CD8-positive, alpha-beta T cell (primary cell): ENCODE measurements at regions of chr16 and their contacts with region 1.

Region 1: DNA sequence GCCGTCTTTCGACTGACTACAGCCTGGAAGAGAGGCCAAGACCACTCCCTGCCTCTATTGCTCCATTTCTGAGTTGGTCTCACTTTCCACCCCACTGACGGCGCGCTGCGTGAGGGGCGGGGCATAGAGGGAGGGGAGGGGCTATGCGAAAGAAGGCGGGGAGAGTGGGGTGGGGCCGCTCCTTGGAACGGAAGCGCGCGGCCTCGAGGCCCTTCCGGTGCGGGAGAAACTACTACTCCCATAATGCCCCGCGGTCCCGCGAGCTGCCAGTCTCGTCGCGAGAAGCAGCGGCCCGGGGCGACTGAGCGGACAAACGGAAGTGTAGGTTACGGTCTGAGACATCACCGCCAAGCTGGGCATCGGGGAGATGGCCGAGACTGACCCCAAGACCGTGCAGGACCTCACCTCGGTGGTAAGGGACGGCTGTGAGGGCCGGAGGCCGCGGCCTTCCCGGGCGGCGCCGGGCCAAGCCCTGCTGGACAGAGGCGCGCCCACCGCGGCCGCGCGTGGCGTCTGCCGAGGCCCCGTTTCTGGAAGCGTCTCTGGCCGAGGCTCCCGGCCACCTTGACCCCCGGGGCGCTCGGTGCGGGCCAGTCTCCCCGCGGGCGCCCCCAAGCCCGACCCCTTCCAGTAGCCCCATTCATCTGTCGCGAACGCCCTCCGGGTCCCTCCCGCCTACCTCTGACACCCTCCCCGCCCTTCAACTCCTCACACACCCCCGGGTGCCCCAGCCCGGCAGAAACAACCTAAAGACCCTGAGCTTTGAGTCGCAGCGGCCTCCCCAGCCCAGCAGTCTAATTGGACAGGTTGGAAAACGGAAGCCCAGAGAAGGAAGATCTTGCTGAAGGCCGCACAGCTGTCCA is at the start of gene HSBP1:
- DNase-seq: peak; percentile 83 to 95 (median 92)
- ATAC-seq: peak; percentile 98
- H3K4me3 ChIP-seq: peak within 1 kb of the TSS; percentile 82 to 91
- H3K4me3 Mint-ChIP-seq: peak within 1 kb of the TSS; percentile 98
- H3K27ac ChIP-seq: peak within 1 kb of the TSS; percentile 70 to 85
- H3K27ac Mint-ChIP-seq: peak within 1 kb of the TSS; percentile 96
- H3K4me1 ChIP-seq: peaks cover 10% of the 10 kb centered on the region
- H3K4me1 Mint-ChIP-seq: peaks cover 36% of the 10 kb centered on the region
- H3K27me3 ChIP-seq: no peaks in the 10 kb centered on the region
- H3K27me3 Mint-ChIP-seq: no peaks in the 10 kb centered on the region
- CTCF ChIP-seq: no peak
- total RNA-seq, gene HSBP1: 17.5 to 24.1 TPM

Region 2: DNA sequence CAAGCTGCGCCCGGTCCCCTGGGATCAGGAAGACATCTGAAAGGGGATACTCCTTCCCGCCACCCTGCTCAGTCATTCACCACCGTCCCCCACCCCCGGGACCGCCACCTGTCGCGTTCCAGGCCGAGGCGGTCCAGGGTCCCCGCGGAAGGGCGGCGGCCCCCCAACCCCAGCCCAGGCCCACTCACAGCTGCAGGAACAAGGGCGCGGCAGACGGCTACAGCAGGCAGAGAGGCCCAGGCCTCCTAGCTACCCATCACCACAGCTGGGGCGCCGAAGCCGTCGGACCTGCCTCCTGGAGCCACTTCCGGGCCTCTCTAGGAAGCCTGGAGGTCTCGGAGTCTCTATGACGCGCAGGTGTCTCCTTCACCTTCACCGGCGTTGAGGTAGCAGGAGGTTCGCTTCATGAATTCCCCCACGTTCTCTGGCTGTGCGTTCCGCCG is 1796.7 kb before region 1 on chr16 and contains the start of gene SDR42E1:
- CTCF ChIA-PET with region 1: no interaction called
- POLR2A ChIA-PET with region 1: no interaction called
- intact Hi-C with region 1: loop called in 1 of 2 experiments (anchors 5 kb)
- DNase-seq: peak; percentile 10 to 84 (median 71)
- ATAC-seq: peak; percentile 93
- H3K4me3 ChIP-seq: peak within 1 kb of the TSS; percentile 65 to 71
- H3K4me3 Mint-ChIP-seq: peak within 1 kb of the TSS; percentile 92
- H3K27ac ChIP-seq: peak within 1 kb of the TSS; percentile 26 to 34
- H3K27ac Mint-ChIP-seq: peak within 1 kb of the TSS; percentile 92
- H3K4me1 ChIP-seq: peaks cover 12% of the 10 kb centered on the region
- H3K4me1 Mint-ChIP-seq: peaks cover 28% of the 10 kb centered on the region
- H3K27me3 ChIP-seq: no peaks in the 10 kb centered on the region
- H3K27me3 Mint-ChIP-seq: peaks cover 21% of the 10 kb centered on the region
- CTCF ChIP-seq: no peak
- total RNA-seq, gene SDR42E1: 5.6 to 6.7 TPM

Region 3: DNA sequence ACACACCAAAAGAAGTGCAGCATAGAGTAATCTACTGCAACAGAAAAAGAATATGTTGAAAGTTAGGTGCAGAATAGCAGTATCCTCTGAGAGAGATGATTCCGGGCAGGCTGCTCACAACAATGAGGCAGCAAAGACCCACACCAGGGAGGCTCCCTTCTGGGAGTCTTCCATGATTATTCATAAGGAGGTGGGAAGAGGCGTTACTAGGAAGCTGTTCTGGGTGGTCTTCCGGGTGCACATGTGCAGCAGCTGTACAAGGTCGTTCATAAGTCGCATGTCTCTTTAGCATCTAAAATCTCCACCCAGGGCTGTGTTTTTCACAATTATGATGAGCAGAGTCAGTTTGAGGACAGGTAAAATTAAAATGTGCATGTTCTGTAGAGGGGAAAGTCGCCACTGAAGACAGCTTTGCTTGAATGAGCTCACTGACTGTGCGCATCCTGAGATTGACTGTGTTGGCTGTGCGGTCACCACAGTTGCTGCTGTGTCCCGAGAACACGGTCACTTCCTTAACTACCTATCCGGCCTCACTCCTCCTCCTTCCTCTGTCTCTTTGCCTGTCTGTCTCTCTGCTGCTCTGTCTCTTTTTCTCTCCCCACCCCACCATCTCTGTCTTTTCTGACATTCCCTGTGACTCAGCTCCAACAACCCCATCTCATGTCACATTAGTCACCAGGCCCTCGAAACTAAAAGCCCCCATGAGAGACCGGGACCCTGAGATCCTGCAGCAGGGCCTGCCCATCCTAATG is 125.6 kb before region 1 on chr16:
- CTCF ChIA-PET with region 1: no interaction called
- POLR2A ChIA-PET with region 1: no interaction called
- intact Hi-C with region 1: no loop called
- DNase-seq: no peak
- ATAC-seq: no peak
- H3K4me3 ChIP-seq: no peak overlapping the region
- H3K4me3 Mint-ChIP-seq: no peak overlapping the region
- H3K27ac ChIP-seq: no peak overlapping the region
- H3K27ac Mint-ChIP-seq: no peak overlapping the region
- H3K4me1 ChIP-seq: no peaks in the 10 kb centered on the region
- H3K4me1 Mint-ChIP-seq: no peaks in the 10 kb centered on the region
- H3K27me3 ChIP-seq: no peaks in the 10 kb centered on the region
- H3K27me3 Mint-ChIP-seq: peaks cover 17% of the 10 kb centered on the region
- CTCF ChIP-seq: no peak

Region 4: GRCh38 chr16:83898463-83899271 is 90.7 kb after region 1 on chr16 and contains the start of gene MLYCD:
- CTCF ChIA-PET with region 1: no interaction called
- POLR2A ChIA-PET with region 1: interaction called, 5 read pairs
- intact Hi-C with region 1: loop called in 1 of 2 experiments (anchors 1 kb)
- DNase-seq: peak; percentile 39 to 86 (median 68)
- ATAC-seq: peak; percentile 90
- H3K4me3 ChIP-seq: peak within 1 kb of the TSS; percentile 73 to 76
- H3K4me3 Mint-ChIP-seq: peak within 1 kb of the TSS; percentile 96
- H3K27ac ChIP-seq: peak within 1 kb of the TSS; percentile 46 to 47
- H3K27ac Mint-ChIP-seq: peak within 1 kb of the TSS; percentile 90
- H3K4me1 ChIP-seq: peaks cover 25% of the 10 kb centered on the region
- H3K4me1 Mint-ChIP-seq: peaks cover 36% of the 10 kb centered on the region
- H3K27me3 ChIP-seq: no peaks in the 10 kb centered on the region
- H3K27me3 Mint-ChIP-seq: peaks cover 10% of the 10 kb centered on the region
- CTCF ChIP-seq: no peak
- total RNA-seq, gene MLYCD: 2.9 to 4.0 TPM

Region 5: GRCh38 chr16:84144859-84145639 is 337.1 kb after region 1 on chr16 and contains the starts of genes DNAAF1 and HSDL1:
- CTCF ChIA-PET with region 1: no interaction called
- POLR2A ChIA-PET with region 1: no interaction called
- intact Hi-C with region 1: loop called in 1 of 2 experiments (anchors 10 kb)
- DNase-seq: peak; percentile 91 to 98 (median 96)
- ATAC-seq: peak; percentile 81
- H3K4me3 ChIP-seq: peak within 1 kb of the TSS; percentile 70 to 90
- H3K4me3 Mint-ChIP-seq: peak within 1 kb of the TSS; percentile 93
- H3K27ac ChIP-seq: peak within 1 kb of the TSS; percentile 54 to 65
- H3K27ac Mint-ChIP-seq: peak within 1 kb of the TSS; percentile 88
- H3K4me1 ChIP-seq: peaks cover 11% of the 10 kb centered on the region
- H3K4me1 Mint-ChIP-seq: peaks cover 25% of the 10 kb centered on the region
- H3K27me3 ChIP-seq: no peaks in the 10 kb centered on the region
- H3K27me3 Mint-ChIP-seq: peaks cover 2% of the 10 kb centered on the region
- CTCF ChIP-seq: no peak
- total RNA-seq, gene DNAAF1: not detected
- total RNA-seq, gene HSDL1: 8.7 to 9.9 TPM

Region 6: GRCh38 chr16:85799497-85800337 is 1991.8 kb after region 1 on chr16 and contains the starts of genes COX4I1 and EMC8:
- CTCF ChIA-PET with region 1: no interaction called
- POLR2A ChIA-PET with region 1: no interaction called
- intact Hi-C with region 1: loop called (anchors 10 kb)
- DNase-seq: peak; percentile 84 to 96 (median 93)
- ATAC-seq: peak; percentile 76
- H3K4me3 ChIP-seq: peak within 1 kb of the TSS; percentile 83 to 87
- H3K4me3 Mint-ChIP-seq: peak within 1 kb of the TSS; percentile 89
- H3K27ac ChIP-seq: peak within 1 kb of the TSS; percentile 77 to 92
- H3K27ac Mint-ChIP-seq: peak within 1 kb of the TSS; percentile 97
- H3K4me1 ChIP-seq: peaks cover 33% of the 10 kb centered on the region
- H3K4me1 Mint-ChIP-seq: peaks cover 69% of the 10 kb centered on the region
- H3K27me3 ChIP-seq: no peaks in the 10 kb centered on the region
- H3K27me3 Mint-ChIP-seq: no peaks in the 10 kb centered on the region
- CTCF ChIP-seq: no peak
- total RNA-seq, gene COX4I1: 876 to 878 TPM
- total RNA-seq, gene EMC8: 56.0 to 56.2 TPM